Activated CD4-positive, alpha-beta memory T cell treated with anti-CD3 and anti-CD28 coated beads for 36 hours (primary cell): ENCODE measurements at regions of chr17 and their contacts with region 1.

Region 1: GRCh38 chr17:44878627-44879221 is 20.5 kb downstream of the EFTUD2 start:
- DNase-seq: peak; percentile 24
- H3K4me3 Mint-ChIP-seq: no peak overlapping the region
- H3K27ac Mint-ChIP-seq: no peak overlapping the region
- H3K4me1 Mint-ChIP-seq: no peaks in the 10 kb centered on the region
- H3K27me3 Mint-ChIP-seq: no peaks in the 10 kb centered on the region

Region 2: DNA sequence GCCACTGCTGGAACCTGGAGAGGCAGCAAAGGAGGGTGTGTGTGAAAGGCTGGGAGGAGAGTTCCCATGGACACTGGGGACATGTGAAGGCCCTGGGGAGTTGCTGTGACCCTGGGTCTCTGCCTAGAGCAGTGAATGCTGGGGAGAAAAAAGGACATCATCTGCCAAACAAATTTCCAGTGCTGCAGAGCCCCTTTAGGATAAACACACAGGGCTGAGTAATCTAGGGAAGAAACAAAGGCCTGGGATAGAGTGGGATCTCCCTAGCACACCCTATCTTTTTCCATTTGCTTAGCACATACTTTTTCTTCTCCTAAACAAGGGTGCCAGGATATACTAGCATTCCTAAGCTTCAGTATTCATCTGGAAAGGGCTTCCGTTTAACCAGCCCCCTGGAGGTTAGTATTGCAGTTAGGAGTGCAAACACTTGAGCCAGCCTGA is 34.3 kb before region 1 on chr17:
- CTCF ChIA-PET with region 1: no interaction called
- POLR2A ChIA-PET with region 1: no interaction called
- intact Hi-C with region 1: no loop called
- DNase-seq: no peak
- H3K4me3 Mint-ChIP-seq: no peak overlapping the region
- H3K27ac Mint-ChIP-seq: no peak overlapping the region
- H3K4me1 Mint-ChIP-seq: peaks cover 5% of the 10 kb centered on the region
- H3K27me3 Mint-ChIP-seq: no peaks in the 10 kb centered on the region

Region 3: DNA sequence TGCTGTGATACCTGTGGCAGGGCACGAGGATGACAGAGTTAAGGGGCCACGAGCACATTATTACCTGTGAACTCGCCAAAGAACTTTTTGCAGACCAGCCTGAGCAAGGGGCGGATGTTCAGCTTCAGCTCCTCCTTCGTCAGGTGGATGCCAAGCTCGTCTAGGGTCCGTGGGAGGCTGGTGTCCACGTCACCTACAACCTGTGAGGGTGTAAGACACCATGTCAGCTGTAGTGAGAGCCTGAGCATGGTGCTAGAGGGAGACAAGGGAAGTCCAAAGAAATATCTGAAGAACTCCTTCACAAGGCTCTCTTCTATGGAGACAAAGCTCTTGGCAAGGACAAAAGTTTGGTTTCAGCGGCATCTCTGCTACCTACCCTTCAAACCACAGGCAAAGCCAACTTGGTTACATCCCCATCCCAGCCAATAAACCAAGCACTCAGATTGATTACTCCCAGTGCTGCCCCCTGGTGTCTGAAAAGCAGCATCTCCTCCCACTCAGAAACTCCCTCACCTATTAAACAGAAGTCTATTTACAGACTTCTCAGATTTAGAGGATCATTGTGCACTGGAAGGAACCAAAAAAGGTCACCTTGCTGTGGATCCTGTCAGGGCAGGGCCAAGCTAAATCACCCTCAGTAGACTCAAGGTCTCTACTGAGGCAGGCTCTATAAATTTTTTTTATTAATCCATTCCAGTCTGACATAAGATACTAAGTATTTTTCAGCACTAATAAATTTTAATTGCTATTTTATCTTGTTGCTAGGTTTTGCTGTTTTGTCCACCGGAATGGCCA is 13.7 kb before region 1 on chr17:
- CTCF ChIA-PET with region 1: interaction called, 40 read pairs
- POLR2A ChIA-PET with region 1: no interaction called
- intact Hi-C with region 1: no loop called
- DNase-seq: peak; percentile 69
- H3K4me3 Mint-ChIP-seq: no peak overlapping the region
- H3K27ac Mint-ChIP-seq: no peak overlapping the region
- H3K4me1 Mint-ChIP-seq: no peaks in the 10 kb centered on the region
- H3K27me3 Mint-ChIP-seq: no peaks in the 10 kb centered on the region

Region 4: DNA sequence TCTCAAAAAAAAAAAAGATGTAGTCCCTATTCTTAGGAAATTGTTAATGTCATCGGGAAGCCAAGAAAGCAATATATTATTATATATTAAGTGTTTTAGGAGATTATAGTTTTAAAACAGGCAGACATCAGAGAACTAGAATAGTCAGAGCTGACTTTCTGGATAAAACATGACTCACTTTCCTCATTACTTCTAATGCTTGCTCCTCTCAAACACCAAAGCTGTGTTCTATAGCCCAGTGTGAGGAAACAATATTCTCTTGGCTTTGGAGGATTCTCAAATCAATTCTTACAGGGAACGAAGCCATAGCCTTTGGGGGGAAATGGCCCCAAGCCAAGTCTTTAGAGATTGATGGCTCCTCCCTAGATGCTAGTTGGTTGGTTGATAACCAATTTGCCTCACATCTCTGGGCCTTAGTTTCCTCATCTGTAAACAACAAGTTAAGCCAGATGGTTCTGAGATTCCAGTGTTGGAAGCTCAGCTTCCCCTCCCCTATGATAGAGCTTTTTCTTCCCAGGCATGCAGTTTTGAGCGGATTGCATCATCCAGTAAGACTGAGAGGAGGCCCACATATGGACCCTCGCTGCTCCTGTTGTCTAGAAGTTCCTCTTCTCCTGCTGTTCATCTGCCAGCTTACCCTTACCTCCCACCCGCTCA is 194.8 kb after region 1 on chr17:
- CTCF ChIA-PET with region 1: no interaction called
- POLR2A ChIA-PET with region 1: no interaction called
- intact Hi-C with region 1: no loop called
- DNase-seq: no peak
- H3K4me3 Mint-ChIP-seq: no peak overlapping the region
- H3K27ac Mint-ChIP-seq: peak overlapping the region; percentile 60
- H3K4me1 Mint-ChIP-seq: peaks cover 29% of the 10 kb centered on the region
- H3K27me3 Mint-ChIP-seq: no peaks in the 10 kb centered on the region